Activated B cell treated with CpG ODN at 0.5 μM for 24 hours (primary cell): ENCODE measurements at regions of chr11 and their contacts with region 1.

Region 1: DNA sequence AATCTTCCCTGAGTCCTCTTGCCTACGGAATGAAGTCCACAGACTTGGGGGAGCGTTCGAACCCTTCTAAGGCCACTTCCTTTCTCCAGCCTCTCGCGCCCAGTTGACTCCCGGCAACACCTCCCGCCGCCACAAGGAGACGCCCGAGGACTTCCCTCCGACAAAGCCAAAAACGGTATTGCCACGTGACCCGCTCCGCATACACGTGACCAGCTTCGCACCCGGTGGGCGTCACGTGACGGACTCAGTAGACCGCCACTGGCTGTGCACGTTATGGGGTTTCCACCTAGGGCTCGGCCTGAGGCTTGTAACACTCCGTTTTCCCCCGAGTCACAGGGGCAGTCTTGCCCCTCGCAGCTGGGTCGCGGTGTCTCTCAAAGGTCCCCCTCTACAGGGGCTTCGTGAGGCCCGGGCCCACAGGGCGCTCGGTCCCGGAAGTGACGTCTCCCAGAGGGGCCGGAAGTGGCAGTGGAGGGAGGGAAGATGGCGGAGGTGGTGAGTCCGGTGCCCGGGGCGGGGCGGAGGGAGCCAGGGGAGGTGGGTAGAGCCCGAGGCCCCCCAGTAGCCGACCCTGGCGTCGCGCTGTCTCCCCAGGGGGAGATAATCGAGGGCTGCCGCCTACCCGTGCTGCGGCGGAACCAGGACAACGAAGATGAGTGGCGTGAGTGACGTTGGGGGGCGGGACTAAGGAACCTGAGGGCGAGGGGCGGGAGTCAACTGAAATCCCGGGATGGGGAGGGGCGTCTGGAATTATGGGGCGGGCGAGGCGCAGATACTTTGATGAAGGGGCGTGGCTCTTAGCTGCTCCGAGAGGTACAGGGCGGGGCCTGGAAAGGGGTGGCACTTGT is at the start of gene KAT5:
- DNase-seq: peak; percentile 98
- ATAC-seq: peak; percentile 81
- H3K4me3 Mint-ChIP-seq: peak within 1 kb of the TSS; percentile 95
- H3K27ac Mint-ChIP-seq: peak within 1 kb of the TSS; percentile 99
- H3K4me1 Mint-ChIP-seq: peaks cover 25% of the 10 kb centered on the region
- H3K27me3 Mint-ChIP-seq: no peaks in the 10 kb centered on the region
- CTCF ChIP-seq: peak; percentile 70
- total RNA-seq, gene KAT5: 108 and 120 TPM in 2 replicates

Region 2: DNA sequence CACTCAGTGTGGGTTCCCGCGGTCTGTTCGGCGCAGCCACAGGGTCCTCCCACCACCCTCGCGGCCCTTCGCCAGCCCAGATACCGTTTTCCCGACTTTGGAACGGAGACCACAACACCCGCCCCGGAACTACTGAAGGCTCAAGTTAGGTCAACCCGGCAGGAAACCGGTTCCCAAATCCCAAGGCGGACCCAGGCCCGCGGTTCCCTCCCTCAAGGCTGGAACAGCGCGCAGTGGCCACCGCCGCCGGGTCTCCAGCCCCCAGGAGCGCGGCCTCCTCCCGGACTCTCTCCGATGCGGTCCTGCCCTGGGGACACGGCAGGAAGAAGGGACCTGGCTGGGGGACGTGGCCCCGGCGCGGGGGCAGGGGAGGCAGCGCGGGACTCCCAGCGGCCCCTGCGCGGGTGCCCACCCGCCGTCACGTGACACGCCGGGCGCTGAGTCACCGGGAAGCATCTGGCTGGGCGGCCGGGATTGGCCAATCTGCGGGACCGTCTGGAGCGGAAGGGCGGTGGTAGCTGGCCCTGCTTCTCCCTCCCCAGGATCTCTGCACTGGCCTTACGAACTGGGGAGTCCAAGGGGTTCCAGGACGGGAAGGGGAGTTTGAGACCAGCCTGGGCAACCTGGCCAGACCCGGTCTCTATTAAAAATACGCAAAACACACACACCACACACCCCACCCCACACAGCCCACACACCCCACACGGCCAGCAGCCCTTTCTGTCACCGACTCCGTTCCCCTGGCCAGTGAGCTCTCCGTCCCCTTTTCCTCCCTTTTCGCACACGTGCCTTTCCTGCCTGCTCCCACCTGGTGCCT is 234.7 kb before region 1 on chr11:
- CTCF ChIA-PET with region 1: no interaction called
- POLR2A ChIA-PET with region 1: interaction called, 10 read pairs
- intact Hi-C with region 1: no loop called
- DNase-seq: peak; percentile 92
- ATAC-seq: peak; percentile 86
- H3K4me3 Mint-ChIP-seq: peak overlapping the region; percentile 96
- H3K27ac Mint-ChIP-seq: peak overlapping the region; percentile 99
- H3K4me1 Mint-ChIP-seq: peaks cover 24% of the 10 kb centered on the region
- H3K27me3 Mint-ChIP-seq: no peaks in the 10 kb centered on the region
- CTCF ChIP-seq: no peak

Region 3: DNA sequence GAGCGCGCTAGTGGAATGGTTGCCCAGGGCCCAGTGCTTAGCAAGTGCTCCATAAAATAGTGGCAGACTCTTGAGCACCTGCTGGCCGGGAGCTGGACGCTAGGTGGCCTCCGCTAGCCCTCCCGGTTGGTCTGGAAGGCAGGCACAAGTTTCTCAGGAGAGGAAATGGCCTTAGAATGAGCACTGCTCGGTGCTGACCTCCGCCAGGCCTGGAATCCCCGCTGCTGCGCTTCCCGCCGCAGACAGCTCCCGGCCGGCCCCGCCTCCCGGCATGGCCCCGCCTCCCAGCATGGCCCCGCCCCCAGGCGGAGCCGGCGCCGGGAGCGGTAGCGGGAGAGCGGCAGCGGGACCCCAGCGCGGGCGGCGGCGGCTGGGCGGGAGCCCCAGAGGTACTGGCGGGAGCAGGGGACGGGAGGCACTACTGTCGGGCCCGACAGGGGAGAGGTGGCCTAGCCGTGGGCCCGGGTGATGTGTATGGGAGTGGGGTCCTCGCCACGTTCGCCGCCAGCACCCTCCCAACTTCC is 74.2 kb before region 1 on chr11 and contains the start of gene SIPA1:
- CTCF ChIA-PET with region 1: interaction called, 3 read pairs
- POLR2A ChIA-PET with region 1: interaction called, 33 read pairs
- intact Hi-C with region 1: no loop called
- DNase-seq: peak; percentile 86
- ATAC-seq: peak; percentile 35
- H3K4me3 Mint-ChIP-seq: peak within 1 kb of the TSS; percentile 94
- H3K27ac Mint-ChIP-seq: peak within 1 kb of the TSS; percentile 96
- H3K4me1 Mint-ChIP-seq: peaks cover 51% of the 10 kb centered on the region
- H3K27me3 Mint-ChIP-seq: no peaks in the 10 kb centered on the region
- CTCF ChIP-seq: no peak
- total RNA-seq, gene SIPA1: 236 and 252 TPM in 2 replicates

Region 4: GRCh38 chr11:65779851-65780577 is 68.0 kb after region 1 on chr11:
- CTCF ChIA-PET with region 1: interaction called, 7 read pairs
- POLR2A ChIA-PET with region 1: interaction called, 18 read pairs
- intact Hi-C with region 1: loop called (anchors 1 kb)
- DNase-seq: peak; percentile 78
- ATAC-seq: peak; percentile 63
- H3K4me3 Mint-ChIP-seq: peak overlapping the region; percentile 86
- H3K27ac Mint-ChIP-seq: peak overlapping the region; percentile 59
- H3K4me1 Mint-ChIP-seq: peaks cover 13% of the 10 kb centered on the region
- H3K27me3 Mint-ChIP-seq: no peaks in the 10 kb centered on the region
- CTCF ChIP-seq: no peak

Region 5: DNA sequence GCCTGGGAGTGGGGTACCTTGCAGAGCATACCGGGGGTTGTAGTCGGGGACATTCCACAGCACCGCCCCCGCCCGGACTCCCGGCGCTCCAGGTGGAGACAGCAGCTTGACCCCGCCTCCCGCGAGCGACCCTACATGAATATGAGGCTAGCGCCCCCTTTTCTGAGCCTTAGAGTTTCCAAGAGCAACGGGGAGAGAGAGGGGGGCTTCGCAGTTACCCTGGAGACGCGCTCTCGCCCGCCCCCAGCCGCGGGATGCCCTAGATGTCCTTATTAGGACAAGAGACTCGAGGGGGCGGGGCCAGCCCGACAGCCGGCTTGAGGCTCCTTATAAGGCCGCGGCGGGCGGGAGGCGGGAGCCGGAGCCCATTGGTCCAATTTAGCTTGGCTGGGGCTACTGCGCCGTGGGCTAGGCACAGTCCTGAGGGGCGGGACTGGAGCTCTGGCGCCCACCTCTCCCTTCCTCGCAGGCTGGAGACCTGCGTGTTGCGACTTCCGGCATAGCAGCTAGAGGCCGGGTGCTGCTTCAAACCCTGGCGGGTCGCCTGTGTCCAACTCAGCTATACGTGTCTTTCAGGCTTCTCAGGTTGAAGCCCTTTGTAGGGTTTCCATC is 147.3 kb after region 1 on chr11:
- CTCF ChIA-PET with region 1: interaction called, 7 read pairs
- POLR2A ChIA-PET with region 1: interaction called, 44 read pairs
- intact Hi-C with region 1: loop called (anchors 1 kb)
- DNase-seq: peak; percentile 90
- ATAC-seq: peak; percentile 64
- H3K4me3 Mint-ChIP-seq: peak overlapping the region; percentile 99
- H3K27ac Mint-ChIP-seq: peak overlapping the region; percentile 98
- H3K4me1 Mint-ChIP-seq: peaks cover 53% of the 10 kb centered on the region
- H3K27me3 Mint-ChIP-seq: no peaks in the 10 kb centered on the region
- CTCF ChIP-seq: no peak

Region 6: GRCh38 chr11:65988791-65989592 is 277.0 kb after region 1 on chr11:
- CTCF ChIA-PET with region 1: interaction called, 7 read pairs
- POLR2A ChIA-PET with region 1: interaction called, 6 read pairs
- intact Hi-C with region 1: loop called (anchors 1 kb)
- DNase-seq: peak; percentile 67
- ATAC-seq: peak; percentile 99
- H3K4me3 Mint-ChIP-seq: no peak overlapping the region
- H3K27ac Mint-ChIP-seq: peak overlapping the region; percentile 62
- H3K4me1 Mint-ChIP-seq: peaks cover 5% of the 10 kb centered on the region
- H3K27me3 Mint-ChIP-seq: no peaks in the 10 kb centered on the region
- CTCF ChIP-seq: peak; percentile 75

Region 7: DNA sequence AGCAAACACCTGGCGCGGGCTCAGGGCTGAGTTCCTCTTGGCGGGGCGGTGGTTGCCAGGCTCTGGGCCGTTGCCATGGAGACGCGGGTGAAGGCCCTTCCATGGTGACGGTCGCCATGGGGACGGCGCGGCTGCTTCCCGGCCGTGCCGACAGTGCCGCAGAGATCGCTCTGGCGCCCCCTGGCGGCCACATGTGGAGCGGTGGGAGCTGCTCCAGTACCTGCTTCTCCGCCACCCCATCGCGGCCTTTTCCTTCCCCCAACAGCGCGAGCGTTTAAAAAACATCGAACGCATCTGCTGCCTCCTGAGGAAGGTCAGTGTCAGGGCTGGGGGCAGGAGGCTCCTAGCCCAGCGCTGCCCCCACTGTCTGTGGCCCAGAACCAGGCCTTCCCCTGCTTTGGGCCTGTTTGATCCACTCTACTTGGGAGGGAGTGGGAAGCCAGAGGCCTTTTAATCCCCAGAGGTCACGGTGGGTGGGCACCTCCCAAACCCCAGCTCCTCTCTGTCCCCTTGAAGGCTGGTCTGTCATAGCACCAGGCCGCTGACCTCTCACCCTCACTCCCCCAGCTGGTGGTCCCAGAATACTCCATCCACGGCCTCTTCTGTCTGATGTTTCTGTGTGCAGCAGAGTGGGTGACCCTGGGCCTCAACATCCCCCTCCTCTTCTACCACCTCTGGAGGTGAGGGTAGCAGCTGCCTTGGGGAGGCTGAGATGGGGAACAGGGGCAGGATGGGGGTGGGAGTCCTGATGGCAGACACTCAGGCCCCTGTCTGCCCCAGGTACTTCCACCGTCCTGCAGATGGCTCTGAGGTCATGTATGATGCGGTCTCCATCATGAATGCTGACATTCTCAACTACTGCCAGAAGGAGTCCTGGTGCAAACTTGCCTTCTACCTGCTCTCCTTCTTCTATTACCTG is 570.7 kb after region 1 on chr11:
- CTCF ChIA-PET with region 1: no interaction called
- POLR2A ChIA-PET with region 1: interaction called, 12 read pairs
- intact Hi-C with region 1: no loop called
- DNase-seq: peak; percentile 100
- ATAC-seq: peak; percentile 79
- H3K4me3 Mint-ChIP-seq: peak overlapping the region; percentile 32
- H3K27ac Mint-ChIP-seq: peak overlapping the region; percentile 77
- H3K4me1 Mint-ChIP-seq: peaks cover 36% of the 10 kb centered on the region
- H3K27me3 Mint-ChIP-seq: no peaks in the 10 kb centered on the region
- CTCF ChIP-seq: peak; percentile 70